ENCODE measurements at regions of chr2 and their contacts with region 1.

Region 1: DNA sequence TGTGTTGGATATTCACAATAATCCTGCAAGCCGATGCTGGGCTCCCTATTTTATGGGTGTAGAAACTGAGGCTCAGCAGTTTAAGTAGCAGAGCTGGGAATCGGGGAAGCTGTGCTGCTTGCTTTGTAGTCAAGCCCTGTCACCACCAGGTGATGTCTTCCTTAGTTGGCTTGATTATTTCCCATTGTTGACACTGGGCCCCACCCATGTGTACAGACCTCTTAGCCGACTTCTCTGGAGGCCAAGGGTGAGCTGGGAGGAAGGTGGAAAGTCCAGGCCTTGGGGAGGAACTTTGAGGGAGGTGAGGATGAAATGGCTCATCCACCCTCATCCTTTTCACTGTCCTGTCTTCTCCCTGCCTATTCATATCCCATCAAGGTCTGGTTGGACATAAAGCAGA is 60.0 kb downstream of the CAPN13 start:
- DNase-seq: peak; percentile 77
- H3K4me3 ChIP-seq: no peak overlapping the region
- H3K27ac ChIP-seq: no peak overlapping the region
- H3K4me1 ChIP-seq: no peaks in the 10 kb centered on the region
- H3K27me3 ChIP-seq: no peaks in the 10 kb centered on the region
- CTCF ChIP-seq: peak; percentile 27

Region 2: DNA sequence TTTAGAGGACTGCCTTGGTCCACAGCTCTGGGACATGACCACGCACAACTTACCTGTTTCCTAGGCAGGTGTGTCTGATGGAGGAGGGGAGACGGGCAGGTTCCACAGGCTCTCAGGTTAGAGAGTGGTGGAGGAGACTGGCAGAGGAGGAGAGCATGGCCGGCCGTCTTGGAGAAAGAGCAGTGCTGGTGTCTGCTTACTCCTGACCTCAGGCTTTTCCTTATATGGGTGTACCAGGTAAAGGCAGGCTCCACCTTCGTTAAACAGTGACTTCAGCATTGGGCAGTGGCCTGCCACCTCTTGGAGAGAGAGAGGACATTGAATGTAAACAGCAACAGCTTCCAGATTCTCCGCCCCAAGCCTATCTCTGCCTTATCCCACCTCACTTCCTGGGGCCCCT is 60.0 kb after region 1 on chr2 and contains the start of gene CAPN13:
- intact Hi-C with region 1: loop called (anchors 5 kb)
- DNase-seq: peak; percentile 81
- H3K4me3 ChIP-seq: peak within 1 kb of the TSS; percentile 10
- H3K27ac ChIP-seq: peak within 1 kb of the TSS; percentile 33
- H3K4me1 ChIP-seq: no peaks in the 10 kb centered on the region
- H3K27me3 ChIP-seq: no peaks in the 10 kb centered on the region
- CTCF ChIP-seq: no peak
- total RNA-seq, gene CAPN13: 25.5 to 31.2 TPM